Activated CD4-positive, alpha-beta T cell treated with anti-CD3 and anti-CD28 coated beads for 36 hours (primary cell): ENCODE measurements at regions of chr16 and their contacts with region 1.

Region 1: DNA sequence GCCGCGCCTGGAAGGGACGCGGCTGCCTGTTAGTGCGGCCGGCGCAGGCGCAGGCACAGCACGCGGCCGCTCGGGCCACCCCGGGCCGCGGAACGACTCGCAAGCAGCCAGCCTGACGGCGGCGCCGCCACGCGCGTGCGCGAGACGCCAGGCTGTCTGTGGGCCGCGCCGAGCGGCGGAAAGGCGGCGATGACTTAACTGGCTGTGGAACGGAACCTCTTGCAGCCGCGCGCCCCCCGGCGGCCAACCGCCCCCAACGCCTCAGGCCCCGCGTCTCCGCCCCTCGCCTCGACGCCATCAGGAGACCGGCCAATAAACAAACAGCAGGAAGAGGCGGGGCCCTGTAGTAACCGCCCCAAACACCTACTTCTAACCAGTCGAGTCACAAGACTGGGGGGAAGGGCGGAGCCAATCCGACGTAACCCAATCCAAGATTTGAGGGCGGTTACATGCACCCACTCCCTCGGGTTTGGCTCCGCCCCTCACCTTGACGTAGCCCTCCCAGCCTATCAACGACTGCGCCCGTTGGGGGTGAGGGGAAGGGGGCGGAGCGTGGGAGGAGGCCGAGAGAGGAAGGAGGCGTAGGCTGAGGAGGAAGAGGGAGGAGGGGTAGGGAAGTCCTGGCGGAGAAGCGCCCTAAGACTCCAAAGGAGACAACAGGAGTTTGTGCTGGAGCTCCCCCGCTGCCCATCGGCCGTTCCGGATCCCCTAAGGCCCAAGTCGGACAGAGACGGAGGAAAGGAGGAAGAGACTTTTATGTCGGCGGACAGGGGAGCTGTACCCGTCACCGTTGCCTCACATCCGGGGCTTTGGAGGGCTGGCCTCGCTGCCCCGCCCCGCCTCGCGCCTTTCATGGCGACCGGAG is at the start of gene FBRS:
- DNase-seq: peak; percentile 100
- ATAC-seq: peak; percentile 79
- H3K4me3 Mint-ChIP-seq: peak within 1 kb of the TSS; percentile 89
- H3K27ac Mint-ChIP-seq: peak within 1 kb of the TSS; percentile 99
- H3K4me1 Mint-ChIP-seq: peaks cover 41% of the 10 kb centered on the region
- H3K27me3 Mint-ChIP-seq: no peaks in the 10 kb centered on the region
- total RNA-seq, gene FBRS: 84.7 to 111 TPM

Region 2: DNA sequence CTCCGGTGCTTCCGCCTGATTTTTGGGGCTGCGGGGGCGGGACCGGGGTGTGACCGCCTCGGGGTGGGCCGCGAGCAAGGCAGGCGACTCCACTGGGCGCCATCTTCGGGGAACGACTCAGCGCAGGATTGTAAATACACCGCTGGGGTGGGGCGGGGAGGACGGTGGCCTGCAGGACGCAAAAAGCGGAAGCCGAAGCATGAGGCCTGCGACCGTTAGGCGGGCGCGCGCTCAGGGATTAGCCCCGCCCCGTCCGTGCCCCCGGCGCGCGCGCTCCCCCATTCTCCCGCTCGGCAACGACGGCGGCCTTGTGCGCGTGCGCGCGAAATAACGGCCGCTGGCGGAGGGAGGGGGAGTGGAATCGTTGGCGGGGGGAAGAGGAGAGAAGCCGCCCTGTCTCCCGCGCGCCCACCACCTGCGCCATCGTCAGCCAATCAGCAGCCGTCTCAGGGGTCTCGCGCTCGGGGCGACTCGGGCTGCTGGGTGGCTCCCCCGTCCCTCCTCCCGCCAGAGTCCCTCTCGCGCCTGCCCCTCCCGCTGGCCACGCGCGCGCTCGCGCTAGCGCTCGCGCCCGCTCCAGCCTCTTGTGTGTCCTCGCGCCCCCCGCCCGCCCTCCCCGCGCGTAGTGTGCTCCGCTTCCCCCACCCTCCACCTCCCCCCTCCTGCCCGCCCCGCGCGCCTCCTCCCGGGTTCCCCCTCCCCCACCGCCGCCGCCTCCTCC is 852.6 kb before region 1 on chr16:
- CTCF ChIA-PET with region 1: interaction called, 3 read pairs
- POLR2A ChIA-PET with region 1: no interaction called
- intact Hi-C with region 1: loop called in 1 of 2 experiments (anchors 2 kb)
- DNase-seq: peak; percentile 99
- ATAC-seq: peak; percentile 64
- H3K4me3 Mint-ChIP-seq: peak overlapping the region; percentile 99
- H3K27ac Mint-ChIP-seq: peak overlapping the region; percentile 100
- H3K4me1 Mint-ChIP-seq: peaks cover 37% of the 10 kb centered on the region
- H3K27me3 Mint-ChIP-seq: no peaks in the 10 kb centered on the region

Region 3: DNA sequence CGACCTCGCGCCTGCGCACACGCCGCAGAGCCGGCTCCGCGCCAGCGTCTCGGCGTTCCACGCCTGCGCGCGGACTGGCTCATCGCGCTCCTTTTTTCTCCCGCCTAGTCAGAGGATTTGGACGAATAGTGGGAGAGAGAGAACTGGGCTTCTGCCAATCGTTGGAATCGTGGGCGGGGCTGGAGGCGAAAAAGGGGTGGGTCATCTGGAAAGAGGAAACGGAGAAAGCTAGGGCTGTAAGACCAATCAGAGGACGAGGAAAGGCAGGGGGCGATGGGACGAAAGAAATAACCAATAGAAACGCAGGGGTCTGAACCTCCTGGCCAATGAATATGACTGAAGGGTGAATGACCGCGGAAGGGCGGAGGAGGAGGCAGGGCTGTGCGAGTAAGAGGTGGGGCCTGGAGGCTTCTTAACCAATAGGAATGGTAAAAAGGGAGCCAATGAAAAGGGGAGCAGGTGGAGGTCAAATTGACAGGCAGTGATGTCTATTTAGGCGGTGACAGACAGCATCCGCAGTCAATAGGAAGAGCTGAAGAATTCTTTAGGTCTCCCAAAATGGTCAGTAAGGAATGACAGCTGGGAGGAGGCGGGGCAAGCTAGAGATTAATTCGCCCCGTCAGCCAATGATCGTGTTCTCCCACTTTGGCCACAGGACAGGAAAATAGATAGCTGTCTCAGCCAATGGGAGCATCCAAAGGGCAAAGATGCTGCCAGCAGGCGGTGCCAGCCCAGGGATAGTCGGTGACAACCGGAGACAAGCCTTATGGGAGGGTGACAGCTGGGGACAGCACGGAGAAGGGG is 287.5 kb before region 1 on chr16 and contains the start of gene TBC1D10B:
- CTCF ChIA-PET with region 1: interaction called, 3 read pairs
- POLR2A ChIA-PET with region 1: no interaction called
- intact Hi-C with region 1: loop called in 1 of 2 experiments (anchors 1 kb)
- DNase-seq: peak; percentile 99
- ATAC-seq: peak; percentile 88
- H3K4me3 Mint-ChIP-seq: peak within 1 kb of the TSS; percentile 89
- H3K27ac Mint-ChIP-seq: peak within 1 kb of the TSS; percentile 97
- H3K4me1 Mint-ChIP-seq: peaks cover 40% of the 10 kb centered on the region
- H3K27me3 Mint-ChIP-seq: no peaks in the 10 kb centered on the region
- total RNA-seq, gene TBC1D10B: 38.1 to 43.4 TPM

Region 4: DNA sequence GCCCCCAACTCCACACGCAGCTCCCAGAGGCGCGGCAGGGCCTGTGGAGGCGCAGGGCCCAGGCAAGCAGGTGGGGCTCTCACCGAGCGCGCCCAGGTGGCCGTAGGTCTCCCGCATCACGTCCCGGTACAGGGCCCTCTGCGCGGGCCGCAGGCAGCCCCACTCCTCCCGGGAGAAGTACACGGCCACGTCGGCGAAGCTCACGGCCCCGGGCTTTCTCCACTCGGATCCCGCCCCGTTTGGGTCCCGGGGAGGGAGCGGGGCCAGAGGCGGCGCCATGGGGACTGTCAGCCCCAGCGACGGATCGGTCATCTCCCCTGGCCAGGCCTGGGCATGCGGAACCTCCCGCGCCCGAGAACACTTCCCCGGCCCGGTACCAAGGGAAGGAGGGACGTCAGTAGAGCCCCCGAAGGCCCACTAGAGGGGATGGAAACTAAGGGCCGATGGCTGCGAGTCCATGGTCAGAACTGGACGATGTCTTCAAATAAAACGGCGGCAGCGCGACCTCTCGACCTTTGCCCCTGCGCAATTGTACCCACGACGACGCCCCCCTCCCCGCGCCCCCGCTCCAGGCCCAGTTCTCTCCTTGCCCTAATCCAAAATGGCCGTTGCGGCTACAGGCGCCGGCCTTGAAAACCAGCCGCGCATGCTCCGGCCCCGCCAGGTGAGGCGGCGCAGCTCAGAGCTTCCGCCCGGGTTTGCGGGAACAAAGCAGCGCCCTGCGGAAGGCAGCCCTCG is 123.6 kb before region 1 on chr16 and contains the start of gene ZNF747:
- CTCF ChIA-PET with region 1: no interaction called
- POLR2A ChIA-PET with region 1: interaction called, 4 read pairs
- intact Hi-C with region 1: loop called (anchors 1 to 5 kb)
- DNase-seq: peak; percentile 95
- ATAC-seq: peak; percentile 80
- H3K4me3 Mint-ChIP-seq: peak within 1 kb of the TSS; percentile 91
- H3K27ac Mint-ChIP-seq: peak within 1 kb of the TSS; percentile 100
- H3K4me1 Mint-ChIP-seq: peaks cover 44% of the 10 kb centered on the region
- H3K27me3 Mint-ChIP-seq: no peaks in the 10 kb centered on the region
- total RNA-seq, gene ZNF747: 6.3 to 8.0 TPM

Region 5: GRCh38 chr16:30628627-30629540 is 29.2 kb before region 1 on chr16:
- CTCF ChIA-PET with region 1: interaction called, 4 read pairs
- POLR2A ChIA-PET with region 1: interaction called, 6 read pairs
- intact Hi-C with region 1: loop called (anchors 1 kb)
- DNase-seq: peak; percentile 95
- ATAC-seq: peak; percentile 93
- H3K4me3 Mint-ChIP-seq: peak overlapping the region; percentile 58
- H3K27ac Mint-ChIP-seq: peak overlapping the region; percentile 82
- H3K4me1 Mint-ChIP-seq: peaks cover 14% of the 10 kb centered on the region
- H3K27me3 Mint-ChIP-seq: no peaks in the 10 kb centered on the region

Region 6: GRCh38 chr16:30813821-30814189 is 155.7 kb after region 1 on chr16:
- CTCF ChIA-PET with region 1: no interaction called
- POLR2A ChIA-PET with region 1: interaction called, 6 read pairs
- intact Hi-C with region 1: loop called in 1 of 2 experiments (anchors 1 kb)
- DNase-seq: no peak
- ATAC-seq: peak; percentile 4
- H3K4me3 Mint-ChIP-seq: peak overlapping the region; percentile 87
- H3K27ac Mint-ChIP-seq: peak overlapping the region; percentile 81
- H3K4me1 Mint-ChIP-seq: peaks cover 12% of the 10 kb centered on the region
- H3K27me3 Mint-ChIP-seq: no peaks in the 10 kb centered on the region

Region 7: DNA sequence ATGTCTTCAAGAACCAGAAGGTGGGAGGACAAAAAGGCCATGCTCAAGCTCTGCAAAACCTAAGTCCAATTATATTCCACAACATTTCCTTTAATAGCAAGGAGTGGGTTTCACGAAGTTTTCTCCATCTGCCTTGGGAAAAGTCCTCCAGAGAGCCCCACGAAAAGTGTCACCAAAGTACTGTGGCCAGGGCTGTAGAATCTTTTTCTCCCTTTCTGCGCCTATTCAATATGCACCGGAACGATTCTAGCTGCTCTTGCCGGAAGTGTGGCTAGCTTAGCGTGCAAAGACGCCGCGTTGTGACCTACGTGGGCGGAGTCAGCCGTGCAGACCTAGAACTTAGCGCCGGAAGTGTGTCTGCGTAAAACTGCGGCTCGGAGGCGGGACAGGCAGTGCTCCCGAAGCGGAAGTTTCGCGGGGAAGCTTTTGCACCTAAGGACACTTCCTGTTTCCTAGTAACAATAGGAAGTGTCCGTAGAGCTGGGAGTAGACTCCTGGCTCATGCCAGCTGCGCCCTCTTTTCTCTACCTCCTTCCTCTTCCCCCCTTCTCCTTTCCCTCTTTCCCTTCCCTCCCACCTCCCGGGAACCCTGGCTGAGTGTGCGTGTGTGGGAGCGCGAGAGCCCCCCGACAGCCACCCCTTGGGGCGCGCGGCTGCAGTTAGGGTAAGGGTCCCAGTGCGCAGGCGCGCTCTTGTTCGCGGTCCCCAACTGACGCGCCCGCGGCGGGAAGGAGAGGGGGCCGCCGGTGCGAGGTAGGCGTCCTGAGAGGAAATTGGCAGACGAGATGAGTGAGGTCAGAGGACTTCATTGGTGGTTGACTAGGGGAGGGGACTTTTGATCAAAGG is 416.1 kb after region 1 on chr16 and contains the starts of genes ZNF646 and ZNF668:
- CTCF ChIA-PET with region 1: no interaction called
- POLR2A ChIA-PET with region 1: no interaction called
- intact Hi-C with region 1: loop called in 1 of 2 experiments (anchors 1 kb)
- DNase-seq: peak; percentile 99
- ATAC-seq: peak; percentile 83
- H3K4me3 Mint-ChIP-seq: peak within 1 kb of the TSS; percentile 97
- H3K27ac Mint-ChIP-seq: peak within 1 kb of the TSS; percentile 98
- H3K4me1 Mint-ChIP-seq: peaks cover 30% of the 10 kb centered on the region
- H3K27me3 Mint-ChIP-seq: no peaks in the 10 kb centered on the region
- total RNA-seq, gene ZNF646: 21.3 to 25.8 TPM
- total RNA-seq, gene ZNF668: 9.2 to 9.9 TPM